ENCODE measurements at regions of chr18 and their contacts with region 1.

Region 1: GRCh38 chr18:46761059-46761769 is 4.4 kb upstream of the ST8SIA5 start:
- DNase-seq: no peak
- H3K4me3 ChIP-seq: no peak overlapping the region
- H3K27ac ChIP-seq: no peak overlapping the region
- H3K4me1 ChIP-seq: no peaks in the 10 kb centered on the region
- H3K27me3 ChIP-seq: peaks cover 4% of the 10 kb centered on the region
- CTCF ChIP-seq: no peak
- POLR2A ChIP-seq: no peak

Region 2: GRCh38 chr18:46706968-46707367 is 54.2 kb before region 1 on chr18:
- intact Hi-C with region 1: loop called (anchors 10 kb)
- DNase-seq: no peak
- H3K4me3 ChIP-seq: no peak overlapping the region
- H3K27ac ChIP-seq: no peak overlapping the region
- H3K4me1 ChIP-seq: no peaks in the 10 kb centered on the region
- H3K27me3 ChIP-seq: no peaks in the 10 kb centered on the region
- CTCF ChIP-seq: no peak
- POLR2A ChIP-seq: no peak

Region 3: DNA sequence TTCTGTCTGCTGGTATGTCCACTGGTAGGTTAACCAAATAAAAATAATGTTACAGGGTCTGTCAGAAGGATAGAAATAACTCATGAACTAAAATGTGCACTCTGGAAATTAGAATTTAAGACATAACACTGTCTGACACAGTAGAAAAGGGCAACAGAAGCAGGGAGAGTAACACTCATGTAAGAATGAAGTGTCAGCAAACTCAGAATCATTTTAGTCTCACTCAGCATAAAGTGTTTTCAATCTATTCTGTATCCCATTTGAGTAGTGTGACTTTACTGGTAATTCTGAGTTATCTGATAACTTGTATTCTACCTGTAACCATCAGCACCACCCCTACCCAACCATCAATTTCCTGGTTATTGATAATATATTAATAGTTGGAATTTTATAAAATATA is 87.8 kb after region 1 on chr18:
- intact Hi-C with region 1: no loop called
- DNase-seq: no peak
- H3K4me3 ChIP-seq: no peak overlapping the region
- H3K27ac ChIP-seq: no peak overlapping the region
- H3K4me1 ChIP-seq: no peaks in the 10 kb centered on the region
- H3K27me3 ChIP-seq: no peaks in the 10 kb centered on the region
- CTCF ChIP-seq: no peak
- POLR2A ChIP-seq: no peak